ENCODE measurements at regions of chr6 and their contacts with region 1.

Region 1: GRCh38 chr6:2196079-2196679 is 49.2 kb downstream of the GMDS start:
- DNase-seq: peak; percentile 78 to 86 (median 83)
- H3K4me3 ChIP-seq: no peak overlapping the region
- H3K27ac ChIP-seq: no peak overlapping the region
- H3K4me1 ChIP-seq: peaks cover 0 to 20% (median 3%) of the 10 kb centered on the region in 4 experiments
- H3K27me3 ChIP-seq: no peaks in the 10 kb centered on the region

Region 2: GRCh38 chr6:2158596-2159271 is 37.4 kb before region 1 on chr6:
- CTCF ChIA-PET with region 1: no interaction called
- POLR2A ChIA-PET with region 1: interaction called, 10 read pairs
- DNase-seq: peak in 1 of 3 donors; percentile 32
- H3K4me3 ChIP-seq: no peak overlapping the region
- H3K27ac ChIP-seq: no peak overlapping the region
- H3K4me1 ChIP-seq: peaks cover 4 to 37% (median 24%) of the 10 kb centered on the region in 4 experiments
- H3K27me3 ChIP-seq: no peaks in the 10 kb centered on the region

Region 3: GRCh38 chr6:2285510-2285909 is 89.3 kb after region 1 on chr6:
- CTCF ChIA-PET with region 1: no interaction called
- POLR2A ChIA-PET with region 1: no interaction called
- DNase-seq: no peak
- H3K4me3 ChIP-seq: no peak overlapping the region
- H3K27ac ChIP-seq: no peak overlapping the region
- H3K4me1 ChIP-seq: no peaks in the 10 kb centered on the region
- H3K27me3 ChIP-seq: no peaks in the 10 kb centered on the region